Endothelial cell of umbilical vein (primary cell): ENCODE measurements at regions of chrX and their contacts with region 1.

Region 1: DNA sequence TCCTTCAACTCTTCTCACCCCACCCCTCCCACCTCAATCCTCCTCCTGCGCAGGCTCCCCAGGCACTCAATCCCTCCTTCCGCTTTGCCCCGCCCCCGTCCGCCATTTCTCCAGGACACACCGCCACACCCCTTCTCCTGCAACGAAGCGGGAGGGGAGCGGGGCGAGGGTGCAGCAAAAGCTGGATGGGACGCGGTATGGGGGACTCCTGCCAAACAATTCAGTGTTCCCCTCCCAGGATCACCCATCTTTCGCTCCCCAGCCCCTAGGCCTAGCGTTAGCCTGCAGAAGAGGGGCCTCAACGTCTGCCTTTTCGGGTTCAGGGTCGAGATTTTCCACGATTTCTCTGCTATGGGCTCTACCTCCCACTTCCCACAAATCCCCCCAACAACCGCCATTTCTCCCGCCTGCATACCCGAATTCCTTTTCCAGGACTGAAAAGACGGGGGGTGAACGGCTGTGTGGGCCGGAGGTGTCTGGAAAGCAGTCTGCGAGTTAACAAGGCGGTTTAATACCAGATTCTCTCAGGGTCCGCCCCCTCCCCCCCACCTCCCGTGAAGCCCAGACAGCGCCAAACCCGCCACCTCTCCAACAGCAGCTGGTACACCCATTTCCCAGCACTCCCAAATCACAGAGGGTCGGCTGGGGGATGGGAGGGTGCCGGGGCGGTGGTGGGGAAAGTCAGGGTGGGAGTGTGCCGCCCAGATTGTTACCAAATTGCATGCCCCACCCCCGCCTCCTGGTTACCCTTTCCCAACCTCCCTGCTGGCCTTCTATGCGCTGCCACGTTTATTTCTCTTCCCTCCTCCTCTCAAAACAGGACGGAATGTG is 774 bp downstream of the ARMCX2 start:
- DNase-seq: peak; percentile 51
- H3K4me3 ChIP-seq: peak overlapping the region; percentile 71 to 88 (median 87)
- H3K27ac ChIP-seq: peak overlapping the region; percentile 18
- H3K4me1 ChIP-seq: no peaks in the 10 kb centered on the region
- H3K27me3 ChIP-seq: peaks cover 0 to 2% of the 10 kb centered on the region in 2 experiments
- CTCF ChIP-seq: no peak
- POLR2A ChIP-seq: peak; percentile 38

Region 2: DNA sequence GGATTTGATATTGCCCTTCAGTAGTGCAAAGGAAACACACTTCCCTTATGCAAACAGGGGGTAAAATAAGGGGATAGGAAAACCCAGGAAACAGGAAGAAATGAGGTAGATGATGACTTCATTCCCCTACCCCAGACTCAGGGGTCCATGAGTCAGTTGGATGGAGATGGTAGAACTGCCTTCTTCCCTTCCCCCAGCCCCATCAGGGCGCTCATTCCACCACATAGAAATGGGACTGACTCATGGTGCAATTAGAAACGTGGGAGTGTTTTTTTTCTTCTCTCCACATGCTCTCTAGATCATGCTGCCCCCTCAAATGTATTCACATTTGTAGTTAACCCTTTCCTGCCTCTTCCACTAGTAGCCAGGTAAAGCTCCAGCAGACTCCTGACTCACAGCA is 23.8 kb after region 1 on chrX:
- CTCF ChIA-PET with region 1: no interaction called
- POLR2A ChIA-PET with region 1: no interaction called
- dilution Hi-C with region 1: no loop called
- intact Hi-C with region 1: loop called (anchors 1 kb)
- DNase-seq: peak; percentile 73
- H3K4me3 ChIP-seq: no peak overlapping the region
- H3K27ac ChIP-seq: peak overlapping the region; percentile 29
- H3K4me1 ChIP-seq: peaks cover 13% of the 10 kb centered on the region
- H3K27me3 ChIP-seq: no peaks in the 10 kb centered on the region
- CTCF ChIP-seq: no peak
- POLR2A ChIP-seq: no peak

Region 3: DNA sequence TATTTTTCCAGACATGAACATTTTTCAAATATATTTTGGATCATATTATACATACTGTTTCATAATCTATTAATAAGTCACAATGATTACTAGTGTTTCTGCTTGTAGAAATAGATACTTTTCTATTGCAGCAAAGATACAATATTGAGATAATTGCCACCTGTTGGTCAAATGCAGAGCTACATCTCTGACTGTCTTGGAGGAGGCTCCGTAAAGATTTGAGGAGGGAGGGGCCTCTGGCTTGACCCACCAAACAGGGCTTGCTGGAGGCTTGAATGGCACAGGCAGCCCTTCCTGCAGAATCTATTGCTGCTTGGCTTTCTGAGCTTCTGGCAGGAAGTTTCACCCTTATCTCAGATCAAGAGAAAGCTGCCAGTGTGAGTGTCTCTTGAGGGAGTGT is 100.1 kb after region 1 on chrX:
- CTCF ChIA-PET with region 1: interaction called, 7 read pairs
- POLR2A ChIA-PET with region 1: interaction called, 3 read pairs
- dilution Hi-C with region 1: no loop called
- intact Hi-C with region 1: loop called (anchors 1 kb)
- DNase-seq: peak; percentile 69
- H3K4me3 ChIP-seq: no peak overlapping the region
- H3K27ac ChIP-seq: no peak overlapping the region
- H3K4me1 ChIP-seq: no peaks in the 10 kb centered on the region
- H3K27me3 ChIP-seq: no peaks in the 10 kb centered on the region
- CTCF ChIP-seq: peak; percentile 22 to 30
- POLR2A ChIP-seq: no peak

Region 4: GRCh38 chrX:102138064-102138463 is 479.2 kb after region 1 on chrX:
- CTCF ChIA-PET with region 1: no interaction called
- POLR2A ChIA-PET with region 1: no interaction called
- dilution Hi-C with region 1: no loop called
- intact Hi-C with region 1: no loop called
- DNase-seq: peak; percentile 1
- H3K4me3 ChIP-seq: no peak overlapping the region
- H3K27ac ChIP-seq: no peak overlapping the region
- H3K4me1 ChIP-seq: no peaks in the 10 kb centered on the region
- H3K27me3 ChIP-seq: peaks cover under 1 to 1% of the 10 kb centered on the region in 2 experiments
- CTCF ChIP-seq: no peak
- POLR2A ChIP-seq: no peak